ENCODE measurements at regions of chr12 and their contacts with region 1.

Region 1: DNA sequence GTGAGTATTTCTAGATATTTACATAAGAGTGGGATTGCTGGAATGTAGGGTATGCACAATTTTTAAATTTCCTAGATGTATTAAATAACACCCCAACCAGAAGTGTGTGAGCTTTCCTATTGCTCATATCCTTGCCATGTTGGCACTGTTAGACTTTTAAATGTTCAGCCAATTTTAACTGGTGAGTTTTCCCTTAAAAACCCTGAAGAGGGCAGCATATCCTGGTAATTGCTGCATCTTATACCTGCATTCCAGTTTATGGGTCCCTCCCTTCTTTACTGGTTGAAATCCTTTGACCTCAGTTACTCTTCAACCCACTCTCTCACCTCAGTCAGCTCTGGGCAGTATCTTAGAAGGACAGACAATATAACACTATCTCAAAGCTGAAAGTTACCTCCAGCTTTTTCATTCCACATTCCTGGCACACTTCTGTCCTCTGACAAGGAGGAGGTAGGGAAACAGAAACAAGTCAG is 270.6 kb downstream of the PAWR start:
- DNase-seq: peak; percentile 60 to 87
- H3K4me3 ChIP-seq: no peak overlapping the region
- H3K27ac ChIP-seq: peak overlapping the region; percentile 63
- H3K4me1 ChIP-seq: peaks cover 63% of the 10 kb centered on the region
- H3K27me3 ChIP-seq: no peaks in the 10 kb centered on the region
- CTCF ChIP-seq: peak; percentile 74

Region 2: DNA sequence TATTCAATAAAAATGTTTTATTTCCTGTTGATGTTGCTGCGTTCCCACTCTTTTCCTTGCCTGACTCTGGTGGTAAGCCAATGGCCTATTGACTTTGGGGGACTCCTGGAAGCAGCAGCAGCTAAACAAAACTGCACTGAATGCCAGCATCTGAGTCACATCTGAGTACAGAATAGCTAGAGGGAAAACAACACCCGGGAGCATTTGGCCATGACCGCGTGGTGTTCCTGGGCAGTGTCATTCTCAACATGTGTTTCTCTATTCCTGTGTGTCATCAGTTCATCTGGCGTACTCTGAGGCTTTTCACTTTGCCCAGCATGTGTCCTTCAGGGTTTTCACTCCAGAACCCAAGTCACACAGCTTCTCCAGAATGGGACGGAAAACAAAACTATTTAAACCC is 31.8 kb after region 1 on chr12:
- CTCF ChIA-PET with region 1: no interaction called
- POLR2A ChIA-PET with region 1: interaction called, 4 read pairs
- intact Hi-C with region 1: loop called (anchors 1 kb)
- DNase-seq: peak; percentile 55 to 66
- H3K4me3 ChIP-seq: no peak overlapping the region
- H3K27ac ChIP-seq: no peak overlapping the region
- H3K4me1 ChIP-seq: no peaks in the 10 kb centered on the region
- H3K27me3 ChIP-seq: no peaks in the 10 kb centered on the region
- CTCF ChIP-seq: no peak

Region 3: DNA sequence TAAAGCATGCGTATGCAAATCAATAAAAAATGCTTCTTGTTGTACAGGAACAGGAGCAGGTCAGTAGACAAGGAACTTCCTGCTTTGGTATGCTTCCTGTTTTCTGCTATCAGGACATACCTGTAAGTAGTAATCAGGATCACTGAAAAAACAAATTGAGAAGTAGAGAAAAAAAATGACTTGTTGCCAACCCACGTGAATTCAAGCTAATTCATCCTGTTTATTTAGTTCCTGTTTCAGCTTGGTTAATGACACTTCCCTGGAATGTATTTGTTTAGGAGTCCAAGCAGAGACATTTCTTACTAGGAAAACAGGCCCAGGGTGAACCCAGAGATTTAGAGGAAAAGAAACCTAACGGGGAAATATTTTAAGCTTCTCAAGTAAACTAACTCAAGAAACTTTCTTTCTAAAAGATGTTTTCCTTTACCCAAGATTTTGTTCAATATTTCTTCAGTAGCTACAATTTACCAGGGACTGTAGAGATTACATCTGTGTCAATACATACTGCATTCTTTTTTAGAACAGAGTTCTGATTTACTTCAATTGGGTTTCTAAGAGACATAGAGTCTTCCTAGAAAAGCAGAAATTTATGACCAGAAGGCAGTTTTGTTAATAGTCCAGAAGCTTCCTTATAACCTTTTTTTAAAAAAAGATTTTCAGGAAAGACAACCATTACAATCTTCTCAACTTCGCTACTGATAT is 146.4 kb after region 1 on chr12:
- CTCF ChIA-PET with region 1: no interaction called
- POLR2A ChIA-PET with region 1: interaction called, 11 read pairs
- intact Hi-C with region 1: no loop called
- DNase-seq: peak in 1 of 2 experiments; percentile 93
- H3K4me3 ChIP-seq: 0 out of 2 replicates have a peak overlapping the region, but pooled peaks have one; percentile 14
- H3K27ac ChIP-seq: peak overlapping the region; percentile 65
- H3K4me1 ChIP-seq: peaks cover 22% of the 10 kb centered on the region
- H3K27me3 ChIP-seq: no peaks in the 10 kb centered on the region
- CTCF ChIP-seq: no peak

Region 4: GRCh38 chr12:79737875-79738718 is 317.9 kb after region 1 on chr12:
- CTCF ChIA-PET with region 1: no interaction called
- POLR2A ChIA-PET with region 1: no interaction called
- intact Hi-C with region 1: loop called (anchors 1 kb)
- DNase-seq: peak; percentile 22 to 63
- H3K4me3 ChIP-seq: no peak overlapping the region
- H3K27ac ChIP-seq: no peak overlapping the region
- H3K4me1 ChIP-seq: peaks cover 12% of the 10 kb centered on the region; the same call in 1 of the 2 replicates
- H3K27me3 ChIP-seq: no peaks in the 10 kb centered on the region
- CTCF ChIP-seq: peak; percentile 81

Region 5: GRCh38 chr12:79935021-79935623 is 514.9 kb after region 1 on chr12 and contains the start of gene PPP1R12A:
- CTCF ChIA-PET with region 1: no interaction called
- POLR2A ChIA-PET with region 1: no interaction called
- intact Hi-C with region 1: loop called (anchors 1 kb)
- DNase-seq: peak; percentile 88 to 97
- H3K4me3 ChIP-seq: peak within 1 kb of the TSS; percentile 70
- H3K27ac ChIP-seq: peak within 1 kb of the TSS; percentile 71
- H3K4me1 ChIP-seq: peaks cover 29% of the 10 kb centered on the region
- H3K27me3 ChIP-seq: no peaks in the 10 kb centered on the region
- CTCF ChIP-seq: no peak
- total RNA-seq, gene PPP1R12A: 55.8 and 69.9 TPM in 2 replicates

Region 6: DNA sequence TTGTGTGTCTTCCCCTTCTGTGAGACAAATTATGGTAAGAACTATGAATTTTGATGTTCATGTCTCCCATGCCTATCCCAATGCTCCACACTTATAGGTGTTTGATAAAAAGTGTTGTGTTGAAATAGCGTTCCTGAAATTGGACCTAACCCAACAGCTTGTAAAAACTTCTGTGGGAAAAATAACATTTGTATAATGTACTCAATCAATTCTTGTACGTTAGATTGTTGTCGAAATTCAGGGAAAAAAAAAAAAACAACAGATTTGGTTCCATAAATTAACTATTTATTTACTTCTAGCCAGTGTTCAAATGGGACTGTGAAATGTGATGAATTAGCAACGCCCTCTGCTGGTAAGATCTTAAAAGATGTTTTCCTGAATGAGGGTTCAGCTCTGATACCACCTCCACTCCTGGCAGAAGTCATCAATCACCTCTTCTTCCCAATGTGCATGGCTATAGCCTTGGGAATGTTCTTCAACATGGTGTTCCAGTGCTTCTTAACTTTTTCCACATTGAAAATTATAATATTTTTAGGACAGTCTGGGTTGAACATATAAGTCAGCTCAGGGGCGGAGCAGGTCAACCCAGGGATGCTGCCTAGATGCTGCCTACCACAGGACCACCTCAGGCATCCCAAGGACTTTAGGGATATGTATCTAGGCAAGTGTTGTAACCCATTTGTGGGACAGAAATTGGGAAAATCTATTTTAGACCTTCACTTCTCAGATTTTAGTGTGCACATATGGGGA is 849.8 kb after region 1 on chr12:
- CTCF ChIA-PET with region 1: no interaction called
- POLR2A ChIA-PET with region 1: no interaction called
- intact Hi-C with region 1: loop called (anchors 1 kb)
- DNase-seq: no peak
- H3K4me3 ChIP-seq: no peak overlapping the region
- H3K27ac ChIP-seq: no peak overlapping the region
- H3K4me1 ChIP-seq: peaks cover 20% of the 10 kb centered on the region
- H3K27me3 ChIP-seq: no peaks in the 10 kb centered on the region
- CTCF ChIP-seq: peak; percentile 84